SK-N-SH (cell line): ENCODE measurements at regions of chr5 and their contacts with region 1.

Region 1: GRCh38 chr5:78899922-78900362 is 85.2 kb downstream of the ARSB start:
- DNase-seq: no peak
- H3K4me3 ChIP-seq: peak overlapping the region in 1 of 2 experiments; percentile 30; a peak in 1 of 4 replicates
- H3K27ac ChIP-seq: no peak overlapping the region
- H3K4me1 ChIP-seq: peaks cover 8 to 16% of the 10 kb centered on the region in 2 experiments; a peak in 3 of 4 replicates
- H3K27me3 ChIP-seq: no peaks in the 10 kb centered on the region
- CTCF ChIP-seq: peak; percentile 64
- EP300 ChIP-seq: no peak
- RAD21 ChIP-seq: peak; percentile 61

Region 2: DNA sequence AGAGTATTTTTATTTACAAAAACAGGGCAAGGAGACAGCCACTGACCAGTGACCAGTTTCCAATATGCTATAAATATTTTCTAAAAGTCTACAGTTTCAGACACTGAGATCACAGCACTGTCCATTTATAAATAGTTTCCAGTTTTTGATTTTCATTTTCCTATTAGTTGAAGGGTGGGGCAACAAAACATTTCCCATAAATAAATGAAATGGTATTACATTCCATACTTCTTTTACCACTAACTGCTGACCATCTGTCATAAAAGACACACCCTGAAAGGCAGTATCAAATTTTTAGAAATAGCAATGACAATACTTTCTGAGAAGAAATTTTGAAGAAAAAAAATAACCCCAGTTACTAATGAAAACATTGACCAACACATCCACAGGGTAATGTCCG is 41.6 kb before region 1 on chr5:
- CTCF ChIA-PET with region 1: no interaction called
- POLR2A ChIA-PET with region 1: no interaction called
- DNase-seq: no peak
- H3K4me3 ChIP-seq: no peak overlapping the region
- H3K27ac ChIP-seq: no peak overlapping the region
- H3K4me1 ChIP-seq: no peaks in the 10 kb centered on the region
- H3K27me3 ChIP-seq: no peaks in the 10 kb centered on the region
- CTCF ChIP-seq: no peak
- EP300 ChIP-seq: no peak
- RAD21 ChIP-seq: no peak

Region 3: GRCh38 chr5:78886341-78887230 is 13.4 kb before region 1 on chr5:
- CTCF ChIA-PET with region 1: interaction called, 12 read pairs
- POLR2A ChIA-PET with region 1: no interaction called
- DNase-seq: peak; percentile 22
- H3K4me3 ChIP-seq: no peak overlapping the region
- H3K27ac ChIP-seq: no peak overlapping the region
- H3K4me1 ChIP-seq: peaks cover 0 to 2% of the 10 kb centered on the region in 2 experiments; a peak in 2 of 4 replicates
- H3K27me3 ChIP-seq: no peaks in the 10 kb centered on the region
- CTCF ChIP-seq: peak; percentile 81
- EP300 ChIP-seq: no peak
- RAD21 ChIP-seq: peak; percentile 57

Region 4: GRCh38 chr5:78927657-78928282 is 27.8 kb after region 1 on chr5:
- CTCF ChIA-PET with region 1: no interaction called
- POLR2A ChIA-PET with region 1: no interaction called
- DNase-seq: no peak
- H3K4me3 ChIP-seq: no peak overlapping the region
- H3K27ac ChIP-seq: peak overlapping the region; percentile 5 to 67; a peak in 2 of 4 replicates
- H3K4me1 ChIP-seq: peaks cover 8% of the 10 kb centered on the region in 2 experiments; a peak in 2 of 4 replicates
- H3K27me3 ChIP-seq: no peaks in the 10 kb centered on the region
- CTCF ChIP-seq: no peak
- EP300 ChIP-seq: no peak
- RAD21 ChIP-seq: no peak

Region 5: GRCh38 chr5:79001471-79001870 is 101.5 kb after region 1 on chr5:
- CTCF ChIA-PET with region 1: no interaction called
- POLR2A ChIA-PET with region 1: no interaction called
- DNase-seq: no peak
- H3K4me3 ChIP-seq: no peak overlapping the region
- H3K27ac ChIP-seq: peak overlapping the region in 1 of 2 experiments; percentile 55; a peak in 2 of 4 replicates
- H3K4me1 ChIP-seq: peaks cover 2 to 9% of the 10 kb centered on the region in 2 experiments; a peak in 2 of 4 replicates
- H3K27me3 ChIP-seq: no peaks in the 10 kb centered on the region
- CTCF ChIP-seq: no peak
- EP300 ChIP-seq: no peak
- RAD21 ChIP-seq: no peak

Region 6: DNA sequence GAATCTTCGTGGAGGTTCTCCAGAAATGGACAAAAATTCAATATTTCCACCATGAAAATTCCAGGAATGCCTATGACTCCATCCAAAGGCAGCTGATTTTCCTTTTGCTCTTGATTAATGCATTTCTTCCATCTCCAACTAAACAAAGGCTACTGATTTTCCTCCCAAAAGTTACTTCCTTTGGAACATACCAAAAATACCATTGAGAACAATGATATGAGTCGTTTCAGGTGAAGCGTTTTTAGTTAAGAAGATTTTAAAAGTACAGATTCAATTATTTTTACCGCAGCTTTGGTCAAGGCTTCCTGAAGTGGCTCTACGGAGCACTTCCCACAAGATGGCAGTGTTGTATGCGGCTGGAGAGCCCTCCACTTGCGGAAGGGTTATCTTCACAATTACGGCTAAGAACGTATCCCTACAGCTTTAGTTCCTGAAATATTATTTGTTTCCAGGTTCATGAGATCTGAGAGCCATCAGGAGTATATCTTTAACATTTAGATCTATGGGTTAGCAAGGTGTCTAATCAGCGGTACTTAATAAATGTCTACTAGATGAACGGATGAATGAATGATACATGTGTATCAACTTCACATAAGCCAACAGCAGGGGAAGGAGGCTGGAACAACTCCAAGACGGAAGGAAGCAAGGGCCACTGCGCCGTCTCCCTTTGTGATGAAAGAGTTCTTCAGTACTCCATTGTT is 121.1 kb after region 1 on chr5:
- CTCF ChIA-PET with region 1: no interaction called
- POLR2A ChIA-PET with region 1: no interaction called
- DNase-seq: peak; percentile 33
- H3K4me3 ChIP-seq: peak overlapping the region; percentile 29 to 38; a peak in 3 of 4 replicates
- H3K27ac ChIP-seq: peak overlapping the region in 1 of 2 experiments; percentile 60; a peak in 3 of 4 replicates
- H3K4me1 ChIP-seq: peaks cover 0 to 11% of the 10 kb centered on the region in 2 experiments; a peak in 3 of 4 replicates
- H3K27me3 ChIP-seq: no peaks in the 10 kb centered on the region
- CTCF ChIP-seq: peak; percentile 91
- EP300 ChIP-seq: peak in 1 of 2 experiments; percentile 22; a peak in 1 of 4 replicates
- RAD21 ChIP-seq: peak; percentile 88